Breast epithelium (tissue), 4 donors: ENCODE measurements at regions of chr14 and their contacts with region 1.

Region 1: GRCh38 chr14:86450085-86450484 is 920.1 kb downstream of the FLRT2 start:
- DNase-seq: no peak
- H3K4me3 ChIP-seq: no peak overlapping the region
- H3K27ac ChIP-seq: no peak overlapping the region
- H3K4me1 ChIP-seq: no peaks in the 10 kb centered on the region
- H3K27me3 ChIP-seq: no peaks in the 10 kb centered on the region
- CTCF ChIP-seq: no peak
- POLR2A ChIP-seq: no peak

Region 2: GRCh38 chr14:86723254-86723624 is 273.2 kb after region 1 on chr14:
- intact Hi-C with region 1: loop called (anchors 5 kb)
- DNase-seq: no peak
- H3K4me3 ChIP-seq: no peak overlapping the region
- H3K27ac ChIP-seq: no peak overlapping the region
- H3K4me1 ChIP-seq: no peaks in the 10 kb centered on the region
- H3K27me3 ChIP-seq: no peaks in the 10 kb centered on the region
- CTCF ChIP-seq: no peak
- POLR2A ChIP-seq: no peak